ENCODE measurements at regions of chr2 and their contacts with region 1.

Region 1: GRCh38 chr2:118881486-118882129 is 34.2 kb upstream of the EN1 start:
- DNase-seq: peak; percentile 66

Region 2: DNA sequence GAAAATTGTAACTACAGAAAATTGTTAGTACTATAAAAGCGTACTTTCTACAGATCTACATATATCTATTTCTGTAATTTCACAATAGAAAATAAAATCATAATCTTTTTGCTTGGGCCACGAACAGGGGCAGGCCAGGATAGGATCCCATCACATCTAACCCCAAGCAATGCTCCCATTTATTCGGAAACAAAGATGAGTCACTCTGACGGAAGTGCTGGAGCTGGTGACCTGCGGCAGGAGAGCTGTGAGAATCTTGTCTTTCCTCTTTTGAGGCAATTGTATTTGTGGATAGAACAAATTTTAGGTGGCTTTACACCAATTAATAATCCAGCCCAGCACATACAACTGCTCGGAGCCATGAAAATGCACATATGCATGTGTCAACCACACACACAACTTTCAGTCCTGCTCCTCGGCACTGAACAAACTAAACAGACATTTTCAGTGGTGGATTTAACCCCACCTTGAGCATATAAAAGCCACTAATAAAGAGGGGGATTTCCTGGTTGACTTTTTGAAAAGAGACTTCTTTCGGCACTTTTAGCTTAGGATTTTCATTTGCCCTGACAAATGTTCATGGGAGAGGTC is 815.6 kb before region 1 on chr2:
- CTCF ChIA-PET with region 1: no interaction called
- POLR2A ChIA-PET with region 1: no interaction called
- DNase-seq: no peak

Region 3: DNA sequence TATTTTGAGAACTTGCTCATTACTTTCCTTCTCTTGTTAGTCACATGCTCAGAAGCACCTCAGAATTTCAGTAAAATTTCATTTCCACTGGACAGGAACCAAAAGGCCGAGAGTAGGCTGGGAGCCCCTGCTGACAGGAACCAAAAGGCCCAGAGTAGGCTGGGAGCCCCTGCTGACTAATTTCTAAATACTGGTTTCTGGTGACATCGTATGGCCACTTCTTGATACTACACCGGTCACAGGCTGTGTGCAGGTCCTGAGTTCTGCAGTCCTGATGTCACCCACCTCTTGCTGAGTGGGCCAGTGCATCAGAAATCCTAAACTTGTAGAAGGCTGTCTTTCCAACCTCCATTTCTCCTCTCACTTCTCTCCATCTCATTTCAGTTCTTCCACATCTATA is 16.5 kb before region 1 on chr2:
- CTCF ChIA-PET with region 1: interaction called, 18 read pairs
- POLR2A ChIA-PET with region 1: no interaction called
- DNase-seq: peak; percentile 60

Measured in HEK293T (cell line).